ENCODE measurements at regions of chr2 and their contacts with region 1.

Region 1: DNA sequence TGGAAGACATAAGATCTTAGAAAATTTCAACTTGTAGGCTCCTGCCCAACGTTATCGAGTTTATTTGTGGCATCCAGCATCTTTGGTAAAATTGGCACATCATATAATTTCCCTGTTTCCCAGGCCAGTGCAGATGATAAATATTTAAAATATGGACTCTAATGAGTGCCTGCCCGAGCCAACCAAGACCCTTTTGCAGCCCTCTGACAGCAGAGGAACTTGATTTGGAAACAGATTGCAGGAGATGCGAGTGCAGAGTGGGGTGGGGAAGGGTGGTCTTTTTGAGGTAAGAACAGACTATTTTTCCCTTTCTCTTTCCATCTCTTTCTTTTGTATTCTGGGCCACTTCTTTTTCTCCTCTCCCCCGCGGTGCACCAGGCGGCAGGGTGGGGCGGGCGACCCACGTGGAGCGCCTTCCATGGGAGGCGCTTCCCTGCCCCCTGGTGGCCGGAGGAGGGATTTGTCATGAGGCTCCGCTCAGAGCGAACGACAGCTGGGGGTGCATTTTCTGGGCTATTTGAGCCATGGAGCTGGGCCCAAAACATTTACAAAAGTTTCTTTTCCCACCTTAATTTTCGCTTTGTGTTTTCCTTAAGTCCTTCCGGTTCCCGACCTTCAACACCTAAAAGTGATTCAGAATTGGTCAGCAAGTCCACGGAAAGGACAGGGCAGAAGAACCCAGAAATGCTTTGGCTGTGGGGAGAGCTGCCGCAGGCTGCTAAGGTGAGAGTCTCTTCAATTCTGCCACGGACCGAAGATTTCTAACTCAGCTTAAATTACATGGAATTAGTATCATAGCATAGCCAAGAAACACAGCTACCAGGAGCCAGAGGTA is 32.7 kb downstream of the LPIN1 start:
- DNase-seq: peak; percentile 63 to 98 (median 84)

Region 2: GRCh38 chr2:11477994-11478393 is 301.1 kb before region 1 on chr2:
- intact Hi-C with region 1: loop called (anchors 10 kb)
- DNase-seq: peak; percentile 83 to 98 (median 96)

Region 3: GRCh38 chr2:11688222-11689069 is 90.7 kb before region 1 on chr2:
- intact Hi-C with region 1: loop called (anchors 1 kb)
- DNase-seq: peak in 8 of 10 donors; percentile 57 to 92 (median 76)

Region 4: GRCh38 chr2:11743846-11744553 is 35.1 kb before region 1 on chr2:
- intact Hi-C with region 1: loop called (anchors 2 kb)
- DNase-seq: peak; percentile 74 to 98 (median 84)

Measured in posterior cingulate gyrus (tissue), 11 donors.